ENCODE measurements at regions of chr13 and their contacts with region 1.

Region 1: DNA sequence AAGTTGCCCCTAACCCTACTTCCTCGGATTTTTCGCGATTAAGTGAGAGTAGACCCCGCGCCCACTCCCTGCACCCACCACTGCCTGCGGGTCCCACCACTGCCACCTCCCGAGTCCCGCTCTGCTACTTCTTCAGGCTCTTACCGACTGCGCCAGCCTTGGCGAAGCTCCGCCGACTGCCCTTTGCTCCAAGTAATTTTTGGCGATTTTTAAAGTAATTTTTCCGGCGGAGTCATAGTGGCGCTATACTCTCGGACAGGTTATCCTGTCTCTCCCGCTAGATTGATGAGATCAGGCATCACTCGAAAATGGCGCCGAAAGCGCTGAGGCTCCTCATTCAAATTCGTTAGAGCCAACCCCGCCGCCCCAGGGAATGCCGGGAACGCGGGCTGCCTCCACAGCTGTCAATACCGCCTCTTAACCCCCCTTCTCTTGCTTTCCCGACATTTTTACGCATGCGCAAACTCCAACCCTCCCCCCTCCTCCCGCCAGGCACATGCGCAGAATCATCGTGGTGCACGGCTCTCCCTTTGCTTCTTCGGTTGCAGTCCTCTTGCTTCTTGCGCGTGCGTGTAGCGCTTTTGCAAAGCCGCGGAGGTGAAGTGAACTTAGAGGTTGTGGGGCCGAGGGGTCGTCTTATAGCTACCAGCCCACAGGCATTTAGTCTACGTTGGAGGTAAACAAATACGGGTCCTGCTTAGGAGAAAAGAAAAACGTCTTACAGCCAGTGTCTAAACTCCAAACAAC is 66.6 kb downstream of the KCNRG start:
- DNase-seq: peak; percentile 98
- ATAC-seq: peak; percentile 85
- H3K4me3 ChIP-seq: peak overlapping the region; percentile 66
- H3K27ac ChIP-seq: peak overlapping the region; percentile 95
- H3K4me1 ChIP-seq: no peaks in the 10 kb centered on the region
- H3K27me3 ChIP-seq: no peaks in the 10 kb centered on the region
- CTCF ChIP-seq: no peak; the same call in 1 of the 2 replicates
- POLR2A ChIP-seq: peak; percentile 62; the same call in 1 of the 2 replicates
- RAD21 ChIP-seq: 0 out of 2 replicates have a peak, but pooled peaks have one; percentile 5

Region 2: GRCh38 chr13:49669735-49670309 is 412.0 kb before region 1 on chr13:
- CTCF ChIA-PET with region 1: no interaction called
- POLR2A ChIA-PET with region 1: no interaction called
- dilution Hi-C with region 1: no loop called
- in situ Hi-C with region 1: loop called (anchors 10 kb)
- intact Hi-C with region 1: loop called (anchors 5 kb)
- DNase-seq: peak; percentile 81
- ATAC-seq: peak; percentile 98
- H3K4me3 ChIP-seq: no peak overlapping the region
- H3K27ac ChIP-seq: no peak overlapping the region
- H3K4me1 ChIP-seq: peaks cover 5% of the 10 kb centered on the region
- H3K27me3 ChIP-seq: no peaks in the 10 kb centered on the region
- CTCF ChIP-seq: peak; percentile 94
- POLR2A ChIP-seq: peak; percentile 61; the same call in 1 of the 2 replicates
- RAD21 ChIP-seq: peak; percentile 98

Region 3: GRCh38 chr13:49936085-49936940 is 145.5 kb before region 1 on chr13 and contains the start of gene SPRYD7:
- CTCF ChIA-PET with region 1: no interaction called
- POLR2A ChIA-PET with region 1: no interaction called
- dilution Hi-C with region 1: no loop called
- in situ Hi-C with region 1: no loop called
- intact Hi-C with region 1: loop called (anchors 5 kb)
- DNase-seq: peak; percentile 97
- ATAC-seq: peak; percentile 100
- H3K4me3 ChIP-seq: peak within 1 kb of the TSS; percentile 74
- H3K27ac ChIP-seq: peak within 1 kb of the TSS; percentile 82
- H3K4me1 ChIP-seq: peaks cover 4% of the 10 kb centered on the region; the same call in 1 of the 2 replicates
- H3K27me3 ChIP-seq: no peaks in the 10 kb centered on the region
- CTCF ChIP-seq: peak; percentile 93
- POLR2A ChIP-seq: peak; percentile 61; the same call in 1 of the 2 replicates
- RAD21 ChIP-seq: peak; percentile 33
- total RNA-seq, gene SPRYD7: 5.6 and 9.7 TPM in 2 replicates

Region 4: DNA sequence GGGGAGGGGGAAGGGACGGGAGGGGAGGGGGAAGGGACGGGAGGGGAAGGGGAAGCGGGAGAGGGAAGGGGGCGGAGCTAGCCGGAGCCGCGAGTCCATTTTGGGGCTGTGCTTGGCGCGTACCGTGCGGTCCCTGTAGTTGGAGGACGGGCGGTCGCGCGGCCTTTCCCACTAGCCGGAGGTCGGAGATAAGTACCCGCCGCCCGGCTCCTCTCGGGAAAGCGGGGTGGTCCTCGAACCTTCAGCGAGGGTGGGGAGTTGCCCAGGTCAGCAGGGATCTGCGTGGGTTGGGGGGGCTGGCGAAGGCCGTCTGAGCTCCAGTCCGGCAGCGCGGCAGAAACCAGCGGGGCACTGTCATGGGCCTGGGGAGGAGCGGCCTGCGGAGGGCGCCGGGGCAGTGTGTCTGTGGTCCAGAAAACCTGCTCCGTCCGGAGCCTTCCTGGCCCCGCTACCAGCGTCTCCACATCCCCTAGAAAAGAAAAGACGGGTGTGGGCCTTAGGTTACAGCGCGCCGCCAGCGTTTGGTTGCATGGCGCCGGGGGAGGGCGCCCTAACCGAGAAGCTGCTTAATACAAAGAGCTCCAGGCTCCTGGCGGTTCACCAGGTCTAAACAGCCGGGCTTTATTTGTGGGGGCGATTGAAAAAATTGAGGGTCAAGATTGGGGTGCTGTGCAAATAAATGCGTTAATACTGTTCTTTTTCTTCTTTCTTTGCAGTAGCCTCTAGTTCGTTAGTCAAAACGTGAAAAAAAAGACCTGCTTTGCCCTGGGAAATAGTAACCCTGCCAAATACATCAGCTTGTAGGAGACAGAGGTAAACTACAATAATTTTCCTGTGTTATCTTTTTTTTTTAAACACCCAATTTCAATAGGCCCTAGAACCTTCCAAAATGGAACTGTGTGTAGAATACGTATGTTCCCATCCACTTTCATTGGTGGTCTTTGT is 84.6 kb before region 1 on chr13 and contains the start of gene TRIM13:
- CTCF ChIA-PET with region 1: interaction called, 13 read pairs
- POLR2A ChIA-PET with region 1: no interaction called
- dilution Hi-C with region 1: no loop called
- in situ Hi-C with region 1: no loop called
- intact Hi-C with region 1: loop called (anchors 1 kb)
- DNase-seq: peak; percentile 88
- ATAC-seq: peak; percentile 87
- H3K4me3 ChIP-seq: peak within 1 kb of the TSS; percentile 87
- H3K27ac ChIP-seq: peak within 1 kb of the TSS; percentile 98
- H3K4me1 ChIP-seq: peaks cover 4% of the 10 kb centered on the region
- H3K27me3 ChIP-seq: no peaks in the 10 kb centered on the region
- CTCF ChIP-seq: peak; percentile 82
- POLR2A ChIP-seq: peak; percentile 87
- RAD21 ChIP-seq: peak; percentile 68
- total RNA-seq, gene TRIM13: 20.1 and 22.5 TPM in 2 replicates

Region 5: GRCh38 chr13:50437252-50437651 is 355.4 kb after region 1 on chr13:
- CTCF ChIA-PET with region 1: no interaction called
- POLR2A ChIA-PET with region 1: no interaction called
- dilution Hi-C with region 1: no loop called
- in situ Hi-C with region 1: no loop called
- intact Hi-C with region 1: no loop called
- DNase-seq: peak; percentile 87
- ATAC-seq: peak; percentile 98
- H3K4me3 ChIP-seq: no peak overlapping the region
- H3K27ac ChIP-seq: no peak overlapping the region; the same call in 1 of the 2 replicates
- H3K4me1 ChIP-seq: peaks cover 5% of the 10 kb centered on the region
- H3K27me3 ChIP-seq: no peaks in the 10 kb centered on the region
- CTCF ChIP-seq: no peak
- POLR2A ChIP-seq: no peak
- RAD21 ChIP-seq: no peak

Region 6: GRCh38 chr13:50457415-50458393 is 375.9 kb after region 1 on chr13:
- CTCF ChIA-PET with region 1: no interaction called
- POLR2A ChIA-PET with region 1: no interaction called
- dilution Hi-C with region 1: no loop called
- in situ Hi-C with region 1: no loop called
- intact Hi-C with region 1: no loop called
- DNase-seq: no peak
- ATAC-seq: no peak
- H3K4me3 ChIP-seq: no peak overlapping the region
- H3K27ac ChIP-seq: no peak overlapping the region
- H3K4me1 ChIP-seq: peaks cover 2% of the 10 kb centered on the region; the same call in 1 of the 2 replicates
- H3K27me3 ChIP-seq: no peaks in the 10 kb centered on the region
- CTCF ChIP-seq: no peak
- POLR2A ChIP-seq: no peak
- RAD21 ChIP-seq: no peak

Region 7: DNA sequence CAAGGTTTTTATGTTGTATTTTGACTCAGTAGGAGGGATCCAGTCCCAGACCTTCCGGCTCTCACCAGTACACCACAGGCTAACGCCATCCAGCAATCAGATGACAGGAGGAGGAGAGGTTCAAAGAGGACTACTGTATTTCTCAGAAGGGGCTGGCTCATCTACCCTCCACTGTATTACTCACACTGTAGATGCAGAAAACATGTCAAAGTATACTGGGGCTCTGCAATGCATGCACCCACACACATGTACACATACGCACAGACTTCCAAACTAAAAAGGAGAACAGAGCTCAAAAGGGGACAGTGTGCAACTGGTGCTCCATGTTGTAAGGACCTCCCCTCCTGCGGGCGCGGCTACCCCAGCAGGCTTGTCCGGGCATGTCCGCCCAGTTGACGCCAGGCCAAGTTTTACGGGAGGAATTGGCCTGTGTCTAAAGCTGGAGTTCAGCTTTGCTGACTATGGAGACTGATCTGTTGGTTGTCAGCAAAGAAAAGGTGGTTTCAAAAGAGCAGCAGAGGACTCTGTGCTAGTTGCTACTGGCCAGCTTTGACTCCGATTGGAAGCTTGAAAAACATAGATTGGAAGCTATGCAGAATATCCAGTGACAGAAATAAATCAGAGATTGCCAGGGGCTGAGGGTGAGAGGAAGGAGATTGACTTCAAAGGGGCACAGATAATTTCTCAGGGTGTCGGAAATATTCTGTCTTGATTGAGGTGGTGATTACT is 447.5 kb after region 1 on chr13:
- CTCF ChIA-PET with region 1: interaction called, 3 read pairs
- POLR2A ChIA-PET with region 1: no interaction called
- dilution Hi-C with region 1: no loop called
- in situ Hi-C with region 1: no loop called
- intact Hi-C with region 1: loop called (anchors 1 kb)
- DNase-seq: peak; percentile 89
- ATAC-seq: peak; percentile 92
- H3K4me3 ChIP-seq: peak overlapping the region; percentile 5; the same call in 1 of the 2 replicates
- H3K27ac ChIP-seq: peak overlapping the region; percentile 83
- H3K4me1 ChIP-seq: peaks cover 18% of the 10 kb centered on the region
- H3K27me3 ChIP-seq: no peaks in the 10 kb centered on the region
- CTCF ChIP-seq: no peak
- POLR2A ChIP-seq: 0 out of 2 replicates have a peak, but pooled peaks have one; percentile 25
- RAD21 ChIP-seq: no peak

Region 8: GRCh38 chr13:50801087-50801931 is 719.5 kb after region 1 on chr13:
- CTCF ChIA-PET with region 1: no interaction called
- POLR2A ChIA-PET with region 1: no interaction called
- dilution Hi-C with region 1: no loop called
- in situ Hi-C with region 1: loop called (anchors 5 kb)
- intact Hi-C with region 1: loop called (anchors 1 kb)
- DNase-seq: peak; percentile 72
- ATAC-seq: peak; percentile 97
- H3K4me3 ChIP-seq: no peak overlapping the region
- H3K27ac ChIP-seq: no peak overlapping the region
- H3K4me1 ChIP-seq: peaks cover 1% of the 10 kb centered on the region; the same call in 1 of the 2 replicates
- H3K27me3 ChIP-seq: peaks cover 18% of the 10 kb centered on the region
- CTCF ChIP-seq: peak; percentile 82
- POLR2A ChIP-seq: no peak
- RAD21 ChIP-seq: peak; percentile 90

Measured in IMR-90 (cell line).